A673 (cell line): ENCODE measurements at regions of chr16 and their contacts with region 1.

Region 1: GRCh38 chr16:180938-181667 is 844 bp downstream of the HBQ1 start:
- DNase-seq: peak; percentile 92
- H3K4me3 ChIP-seq: peak overlapping the region; percentile 52
- H3K27ac ChIP-seq: no peak overlapping the region
- H3K4me1 ChIP-seq: peaks cover 19% of the 10 kb centered on the region
- H3K27me3 ChIP-seq: peaks cover 13% of the 10 kb centered on the region
- CTCF ChIP-seq: peak; percentile 95

Region 2: GRCh38 chr16:117379-118365 is 63.4 kb before region 1 on chr16:
- CTCF ChIA-PET with region 1: interaction called, 6 read pairs
- POLR2A ChIA-PET with region 1: no interaction called
- intact Hi-C with region 1: loop called (anchors 2 kb)
- DNase-seq: peak; percentile 83
- H3K4me3 ChIP-seq: no peak overlapping the region
- H3K27ac ChIP-seq: no peak overlapping the region
- H3K4me1 ChIP-seq: peaks cover 10% of the 10 kb centered on the region
- H3K27me3 ChIP-seq: no peaks in the 10 kb centered on the region
- CTCF ChIP-seq: peak; percentile 85